Adrenal gland (tissue), 19 donors: ENCODE measurements at regions of chr16 and their contacts with region 1.

Region 1: GRCh38 chr16:1745181-1745899 is 26.0 kb downstream of the NME3 start:
- DNase-seq: no peak
- H3K4me3 ChIP-seq: no peak overlapping the region
- H3K27ac ChIP-seq: no peak overlapping the region
- H3K4me1 ChIP-seq: no peaks in the 10 kb centered on the region
- H3K27me3 ChIP-seq: no peaks in the 10 kb centered on the region
- CTCF ChIP-seq: no peak
- POLR2A ChIP-seq: no peak

Region 2: GRCh38 chr16:1583180-1583579 is 162.2 kb before region 1 on chr16:
- intact Hi-C with region 1: no loop called
- DNase-seq: no peak
- H3K4me3 ChIP-seq: no peak overlapping the region
- H3K27ac ChIP-seq: no peak overlapping the region
- H3K4me1 ChIP-seq: no peaks in the 10 kb centered on the region
- H3K27me3 ChIP-seq: no peaks in the 10 kb centered on the region
- CTCF ChIP-seq: no peak
- POLR2A ChIP-seq: no peak

Region 3: GRCh38 chr16:1677802-1678496 is 67.4 kb before region 1 on chr16 and contains the start of gene JPT2:
- intact Hi-C with region 1: loop called in 1 of 2 experiments (anchors 10 kb)
- DNase-seq: peak; percentile 96 to 99 (median 98)
- H3K4me3 ChIP-seq: peak within 1 kb of the TSS in 3 of 4 donors; percentile 48 to 84 (median 64)
- H3K27ac ChIP-seq: peak within 1 kb of the TSS in 4 of 5 donors; percentile 45 to 81 (median 62)
- H3K4me1 ChIP-seq: peaks cover 0 to 11% of the 10 kb centered on the region in 2 donors
- H3K27me3 ChIP-seq: no peaks in the 10 kb centered on the region
- CTCF ChIP-seq: no peak
- POLR2A ChIP-seq: peak in 1 of 2 donors; percentile 36
- total RNA-seq, gene JPT2: 11.9 to 50.5 (median 34.9) TPM